PC-9 (cell line): ENCODE measurements at regions of chr15 and their contacts with region 1.

Region 1: GRCh38 chr15:78241007-78241406 is 6.6 kb upstream of the ACSBG1 start:
- DNase-seq: peak; percentile 43 to 86
- H3K4me3 ChIP-seq: no peak overlapping the region
- H3K27ac ChIP-seq: no peak overlapping the region
- H3K4me1 ChIP-seq: 0 out of 2 replicates have a peak, but pooled peaks cover 3% of the 10 kb centered on the region
- H3K27me3 ChIP-seq: no peaks in the 10 kb centered on the region
- CTCF ChIP-seq: peak; percentile 85

Region 2: GRCh38 chr15:78000091-78000926 is 240.7 kb before region 1 on chr15:
- CTCF ChIA-PET with region 1: no interaction called
- POLR2A ChIA-PET with region 1: no interaction called
- intact Hi-C with region 1: loop called (anchors 2 kb)
- DNase-seq: peak; percentile 65 to 66
- H3K4me3 ChIP-seq: no peak overlapping the region
- H3K27ac ChIP-seq: no peak overlapping the region
- H3K4me1 ChIP-seq: no peaks in the 10 kb centered on the region
- H3K27me3 ChIP-seq: no peaks in the 10 kb centered on the region
- CTCF ChIP-seq: peak; percentile 81

Region 3: GRCh38 chr15:78177447-78177873 is 63.5 kb before region 1 on chr15:
- CTCF ChIA-PET with region 1: interaction called, 3 read pairs
- POLR2A ChIA-PET with region 1: no interaction called
- intact Hi-C with region 1: loop called (anchors 1 kb)
- DNase-seq: peak in 1 of 2 experiments; percentile 57
- H3K4me3 ChIP-seq: no peak overlapping the region
- H3K27ac ChIP-seq: no peak overlapping the region
- H3K4me1 ChIP-seq: no peaks in the 10 kb centered on the region
- H3K27me3 ChIP-seq: no peaks in the 10 kb centered on the region
- CTCF ChIP-seq: peak; percentile 85

Region 4: GRCh38 chr15:78216708-78217107 is 24.3 kb before region 1 on chr15:
- CTCF ChIA-PET with region 1: interaction called, 3 read pairs
- POLR2A ChIA-PET with region 1: interaction called, 18 read pairs
- intact Hi-C with region 1: no loop called
- DNase-seq: peak; percentile 84 to 92
- H3K4me3 ChIP-seq: no peak overlapping the region
- H3K27ac ChIP-seq: 0 out of 2 replicates have a peak overlapping the region, but pooled peaks have one; percentile 30
- H3K4me1 ChIP-seq: peaks cover 72% of the 10 kb centered on the region
- H3K27me3 ChIP-seq: no peaks in the 10 kb centered on the region
- CTCF ChIP-seq: no peak

Region 5: GRCh38 chr15:78276064-78276943 is 35.3 kb after region 1 on chr15:
- CTCF ChIA-PET with region 1: interaction called, 4 read pairs
- POLR2A ChIA-PET with region 1: interaction called, 10 read pairs
- intact Hi-C with region 1: no loop called
- DNase-seq: no peak
- H3K4me3 ChIP-seq: no peak overlapping the region
- H3K27ac ChIP-seq: no peak overlapping the region
- H3K4me1 ChIP-seq: no peaks in the 10 kb centered on the region
- H3K27me3 ChIP-seq: no peaks in the 10 kb centered on the region
- CTCF ChIP-seq: no peak